Brain microvascular endothelial cell (primary cell): ENCODE measurements at regions of chr15 and their contacts with region 1.

Region 1: GRCh38 chr15:31215490-31216214 is 111.0 kb upstream of the KLF13 start:
- DNase-seq: peak; percentile 9
- H3K4me3 ChIP-seq: peak overlapping the region; percentile 36
- H3K27ac ChIP-seq: no peak overlapping the region
- H3K27me3 ChIP-seq: no peaks in the 10 kb centered on the region
- CTCF ChIP-seq: peak; percentile 80

Region 2: DNA sequence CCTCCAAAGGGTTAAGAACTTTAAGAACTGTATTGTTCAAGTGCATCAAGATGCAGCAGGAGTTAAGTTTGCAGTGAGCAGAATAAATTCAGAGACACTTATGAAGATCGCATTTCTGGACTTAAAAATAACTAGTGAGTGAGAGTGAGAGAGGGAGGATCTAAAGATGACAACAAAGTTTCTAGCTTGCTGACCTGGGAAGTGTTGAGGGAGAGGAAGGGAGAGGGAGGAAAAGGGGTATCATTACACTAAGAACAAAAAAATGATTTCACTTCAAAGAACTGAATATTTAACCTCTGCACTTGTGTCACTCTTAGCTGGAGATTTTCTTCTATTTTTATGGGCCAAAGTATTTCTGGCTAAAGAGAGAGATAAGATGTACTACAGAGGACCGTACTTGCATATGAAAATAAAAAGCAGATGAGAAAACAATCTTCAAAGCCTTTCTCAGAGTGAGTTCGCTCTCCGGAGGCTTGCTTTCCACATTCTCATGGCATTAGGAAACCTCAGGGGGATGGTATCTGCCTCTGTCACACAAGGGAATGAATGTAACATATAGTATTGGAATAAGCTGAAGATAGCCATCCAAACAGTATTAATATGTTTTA is 1302.0 kb before region 1 on chr15:
- in situ Hi-C with region 1: no loop called
- DNase-seq: peak; percentile 87
- H3K4me3 ChIP-seq: no peak overlapping the region
- H3K27ac ChIP-seq: peak overlapping the region; percentile 62
- H3K27me3 ChIP-seq: no peaks in the 10 kb centered on the region
- CTCF ChIP-seq: no peak

Region 3: GRCh38 chr15:31302778-31303725 is 87.4 kb after region 1 on chr15:
- in situ Hi-C with region 1: loop called (anchors 25 kb)
- DNase-seq: no peak
- H3K4me3 ChIP-seq: no peak overlapping the region
- H3K27ac ChIP-seq: no peak overlapping the region
- H3K27me3 ChIP-seq: peaks cover 12% of the 10 kb centered on the region
- CTCF ChIP-seq: no peak

Region 4: DNA sequence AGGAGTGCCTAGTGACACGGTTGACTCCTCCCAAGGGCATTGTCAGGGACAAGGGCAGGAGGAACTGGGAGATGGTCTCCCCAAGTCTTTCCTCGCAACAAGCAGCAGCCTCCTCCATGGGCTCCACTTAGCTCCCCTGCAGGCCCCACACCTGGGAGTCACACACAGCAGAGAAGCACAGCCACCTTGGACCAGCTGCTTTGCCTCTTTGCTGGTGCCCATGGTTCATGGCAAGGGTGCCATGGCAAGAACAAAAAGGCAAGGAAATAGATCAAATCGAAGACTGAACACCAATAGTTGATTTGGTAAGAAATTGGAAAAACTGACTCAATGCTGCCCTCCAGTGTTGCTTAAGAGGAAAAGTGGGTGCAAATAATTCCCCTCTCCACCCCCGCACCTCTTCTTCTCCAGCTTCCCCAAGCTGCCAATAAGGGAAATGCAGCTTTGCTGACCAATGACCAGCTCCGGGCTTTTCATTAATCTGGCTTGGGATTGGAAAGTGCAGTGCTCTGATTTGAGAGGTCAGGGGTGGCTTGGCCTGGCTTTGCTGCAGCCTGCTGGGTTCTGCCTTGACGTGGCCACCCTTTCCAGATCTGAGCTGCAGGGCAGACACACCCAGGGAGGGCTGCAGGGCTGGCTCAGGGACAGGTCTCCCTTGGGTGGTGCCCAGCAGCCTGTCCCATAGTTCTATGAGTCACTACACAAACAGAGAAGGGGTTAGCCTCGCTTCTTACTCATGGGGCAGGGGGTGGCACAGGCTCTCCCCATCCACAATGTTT is 273.0 kb after region 1 on chr15:
- in situ Hi-C with region 1: loop called (anchors 25 kb)
- DNase-seq: peak; percentile 79
- H3K4me3 ChIP-seq: no peak overlapping the region
- H3K27ac ChIP-seq: peak overlapping the region; percentile 9
- H3K27me3 ChIP-seq: peaks cover 2% of the 10 kb centered on the region
- CTCF ChIP-seq: peak; percentile 89